CD8-positive, alpha-beta T cell (primary cell): ENCODE measurements at regions of chr6 and their contacts with region 1.

Region 1: GRCh38 chr6:44257025-44257752 is at the start of gene SLC35B2:
- DNase-seq: peak in 8 of 9 experiments; percentile 33 to 87 (median 64)
- ATAC-seq: peak; percentile 79
- H3K4me3 ChIP-seq: peak within 1 kb of the TSS; percentile 93 to 94
- H3K4me3 Mint-ChIP-seq: peak within 1 kb of the TSS; percentile 88
- H3K27ac ChIP-seq: peak within 1 kb of the TSS; percentile 47 to 86
- H3K27ac Mint-ChIP-seq: peak within 1 kb of the TSS; percentile 90
- H3K4me1 ChIP-seq: peaks cover 31% of the 10 kb centered on the region
- H3K4me1 Mint-ChIP-seq: peaks cover 51% of the 10 kb centered on the region
- H3K27me3 ChIP-seq: no peaks in the 10 kb centered on the region
- H3K27me3 Mint-ChIP-seq: no peaks in the 10 kb centered on the region
- CTCF ChIP-seq: peak; percentile 59
- total RNA-seq, gene SLC35B2: 6.3 to 6.4 TPM

Region 2: DNA sequence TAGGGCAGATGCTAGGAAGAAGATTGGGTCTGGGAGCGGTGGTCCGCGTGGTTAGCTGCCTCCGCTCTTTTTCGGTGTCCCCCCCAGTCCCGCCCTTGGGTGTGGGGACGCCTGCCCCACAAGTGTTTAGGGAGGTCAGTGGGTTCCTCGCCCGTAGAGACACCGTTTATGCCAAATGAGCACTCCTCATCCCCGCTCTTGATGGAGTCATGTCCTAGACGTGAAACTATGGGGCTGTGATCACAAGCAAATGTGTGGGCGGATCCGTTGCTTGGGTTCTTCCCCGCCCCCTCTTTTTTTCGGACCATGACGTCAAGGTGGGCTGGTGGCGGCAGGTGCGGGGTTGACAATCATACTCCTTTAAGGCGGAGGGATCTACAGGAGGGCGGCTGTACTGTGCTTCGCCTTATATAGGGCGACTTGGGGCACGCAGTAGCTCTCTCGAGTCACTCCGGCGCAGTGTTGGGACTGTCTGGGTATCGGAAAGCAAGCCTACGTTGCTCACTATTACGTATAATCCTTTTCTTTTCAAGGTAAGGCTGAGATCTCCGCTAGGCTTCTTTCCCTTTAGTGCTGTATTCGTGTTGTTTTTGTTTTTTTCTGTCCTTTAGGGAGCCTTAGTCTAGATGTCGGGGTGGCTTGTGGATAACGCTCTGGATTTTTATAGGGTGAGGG is 10.4 kb before region 1 on chr6 and contains the start of gene HSP90AB1:
- CTCF ChIA-PET with region 1: interaction called, 67 read pairs
- POLR2A ChIA-PET with region 1: interaction called, 114 read pairs
- intact Hi-C with region 1: loop called (anchors 1 kb)
- DNase-seq: peak; percentile 89 to 99 (median 94)
- ATAC-seq: peak; percentile 79
- H3K4me3 ChIP-seq: peak within 1 kb of the TSS; percentile 96 to 98
- H3K4me3 Mint-ChIP-seq: peak within 1 kb of the TSS; percentile 99
- H3K27ac ChIP-seq: peak within 1 kb of the TSS; percentile 95 to 96
- H3K27ac Mint-ChIP-seq: peak within 1 kb of the TSS; percentile 98
- H3K4me1 ChIP-seq: peaks cover 26% of the 10 kb centered on the region
- H3K4me1 Mint-ChIP-seq: peaks cover 50% of the 10 kb centered on the region
- H3K27me3 ChIP-seq: no peaks in the 10 kb centered on the region
- H3K27me3 Mint-ChIP-seq: no peaks in the 10 kb centered on the region
- CTCF ChIP-seq: no peak
- total RNA-seq, gene HSP90AB1: 561 to 585 TPM